GM12878 (cell line): ENCODE measurements at regions of chr1 and their contacts with region 1.

Region 1: GRCh38 chr1:78839704-78840277 is 166.7 kb downstream of the ADGRL4 start:
- DNase-seq: no peak
- ATAC-seq: peak; percentile 75
- H3K4me3 ChIP-seq: no peak overlapping the region
- H3K27ac ChIP-seq: no peak overlapping the region
- H3K4me1 ChIP-seq: no peaks in the 10 kb centered on the region
- H3K27me3 ChIP-seq: no peaks in the 10 kb centered on the region
- CTCF ChIP-seq: peak; percentile 43 to 65 (median 54)
- EP300 ChIP-seq: no peak
- POLR2A ChIP-seq: no peak
- RAD21 ChIP-seq: peak; percentile 78

Region 2: DNA sequence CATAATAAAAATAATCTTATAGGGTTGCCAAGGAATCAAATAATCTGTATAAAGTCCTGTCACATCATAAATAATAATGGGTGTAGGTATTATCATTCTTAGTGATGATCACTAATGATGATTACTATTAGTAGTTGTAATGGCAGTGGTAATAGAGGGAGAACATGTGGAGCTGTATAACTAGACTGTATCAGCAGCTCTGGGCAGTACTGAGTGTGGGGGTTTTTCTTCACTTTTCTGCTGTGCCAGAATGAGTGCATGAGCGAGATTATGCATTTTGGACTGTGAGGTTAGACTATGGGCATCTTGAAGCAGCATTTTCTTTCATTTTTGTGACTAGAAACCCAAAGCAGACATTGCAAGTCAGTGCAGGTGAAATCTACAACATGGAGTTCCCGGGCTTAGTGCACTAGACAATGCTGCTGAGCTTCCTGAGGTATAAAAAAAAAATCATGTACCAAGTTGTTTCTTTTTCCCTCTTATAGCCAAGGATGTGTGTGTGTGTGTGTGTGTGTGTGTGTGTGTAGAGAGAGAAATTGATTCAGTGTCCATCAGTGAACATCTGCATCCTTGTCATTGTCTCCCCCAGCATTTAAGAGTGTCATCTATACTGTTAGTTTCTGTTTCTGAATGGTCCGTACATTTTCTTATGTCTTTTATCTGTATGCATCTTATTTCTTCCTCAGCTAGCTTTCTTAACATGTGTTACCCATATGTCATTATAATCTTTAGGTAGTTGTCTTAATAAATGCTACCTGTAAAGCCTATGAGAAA is 707.4 kb before region 1 on chr1:
- CTCF ChIA-PET with region 1: no interaction called
- POLR2A ChIA-PET with region 1: no interaction called
- RAD21 ChIA-PET with region 1: no interaction called
- SMC1A ChIA-PET with region 1: no interaction called
- in situ Hi-C with region 1: no loop called
- intact Hi-C with region 1: loop called (anchors 10 kb)
- DNase-seq: no peak
- ATAC-seq: peak; percentile 59
- H3K4me3 ChIP-seq: no peak overlapping the region
- H3K27ac ChIP-seq: no peak overlapping the region
- H3K4me1 ChIP-seq: no peaks in the 10 kb centered on the region; the same call in 1 of the 2 replicates
- H3K27me3 ChIP-seq: no peaks in the 10 kb centered on the region
- CTCF ChIP-seq: no peak
- EP300 ChIP-seq: no peak
- POLR2A ChIP-seq: no peak
- RAD21 ChIP-seq: no peak

Region 3: GRCh38 chr1:78645723-78646122 is 194.1 kb before region 1 on chr1:
- CTCF ChIA-PET with region 1: no interaction called
- POLR2A ChIA-PET with region 1: no interaction called
- RAD21 ChIA-PET with region 1: no interaction called
- SMC1A ChIA-PET with region 1: no interaction called
- in situ Hi-C with region 1: no loop called
- intact Hi-C with region 1: no loop called
- DNase-seq: no peak
- ATAC-seq: no peak
- H3K4me3 ChIP-seq: no peak overlapping the region
- H3K27ac ChIP-seq: no peak overlapping the region
- H3K4me1 ChIP-seq: peaks cover 4% of the 10 kb centered on the region; the same call in 1 of the 2 replicates
- H3K27me3 ChIP-seq: no peaks in the 10 kb centered on the region
- CTCF ChIP-seq: no peak
- EP300 ChIP-seq: no peak
- POLR2A ChIP-seq: no peak
- RAD21 ChIP-seq: no peak

Region 4: GRCh38 chr1:78855258-78855657 is 15.5 kb after region 1 on chr1:
- CTCF ChIA-PET with region 1: interaction called, 29 read pairs
- POLR2A ChIA-PET with region 1: interaction called, 4 read pairs
- RAD21 ChIA-PET with region 1: interaction called, 6 read pairs
- SMC1A ChIA-PET with region 1: interaction called, 30 read pairs
- in situ Hi-C with region 1: no loop called
- intact Hi-C with region 1: no loop called
- DNase-seq: peak; percentile 46
- ATAC-seq: peak; percentile 93
- H3K4me3 ChIP-seq: no peak overlapping the region
- H3K27ac ChIP-seq: no peak overlapping the region
- H3K4me1 ChIP-seq: no peaks in the 10 kb centered on the region
- H3K27me3 ChIP-seq: no peaks in the 10 kb centered on the region
- CTCF ChIP-seq: no peak
- EP300 ChIP-seq: no peak; a peak in 1 of 4 replicates
- POLR2A ChIP-seq: no peak
- RAD21 ChIP-seq: no peak

Region 5: GRCh38 chr1:79042117-79042516 is 202.3 kb after region 1 on chr1:
- CTCF ChIA-PET with region 1: interaction called, 18 read pairs
- POLR2A ChIA-PET with region 1: no interaction called
- RAD21 ChIA-PET with region 1: interaction called, 4 read pairs
- SMC1A ChIA-PET with region 1: interaction called, 9 read pairs
- in situ Hi-C with region 1: no loop called
- intact Hi-C with region 1: loop called (anchors 5 kb)
- DNase-seq: peak; percentile 44
- ATAC-seq: peak; percentile 64
- H3K4me3 ChIP-seq: no peak overlapping the region
- H3K27ac ChIP-seq: no peak overlapping the region
- H3K4me1 ChIP-seq: peaks cover 8% of the 10 kb centered on the region; the same call in 1 of the 2 replicates
- H3K27me3 ChIP-seq: no peaks in the 10 kb centered on the region
- CTCF ChIP-seq: no peak
- EP300 ChIP-seq: peak; percentile 58 to 59; a peak in 2 of 4 replicates
- POLR2A ChIP-seq: no peak
- RAD21 ChIP-seq: no peak

Region 6: DNA sequence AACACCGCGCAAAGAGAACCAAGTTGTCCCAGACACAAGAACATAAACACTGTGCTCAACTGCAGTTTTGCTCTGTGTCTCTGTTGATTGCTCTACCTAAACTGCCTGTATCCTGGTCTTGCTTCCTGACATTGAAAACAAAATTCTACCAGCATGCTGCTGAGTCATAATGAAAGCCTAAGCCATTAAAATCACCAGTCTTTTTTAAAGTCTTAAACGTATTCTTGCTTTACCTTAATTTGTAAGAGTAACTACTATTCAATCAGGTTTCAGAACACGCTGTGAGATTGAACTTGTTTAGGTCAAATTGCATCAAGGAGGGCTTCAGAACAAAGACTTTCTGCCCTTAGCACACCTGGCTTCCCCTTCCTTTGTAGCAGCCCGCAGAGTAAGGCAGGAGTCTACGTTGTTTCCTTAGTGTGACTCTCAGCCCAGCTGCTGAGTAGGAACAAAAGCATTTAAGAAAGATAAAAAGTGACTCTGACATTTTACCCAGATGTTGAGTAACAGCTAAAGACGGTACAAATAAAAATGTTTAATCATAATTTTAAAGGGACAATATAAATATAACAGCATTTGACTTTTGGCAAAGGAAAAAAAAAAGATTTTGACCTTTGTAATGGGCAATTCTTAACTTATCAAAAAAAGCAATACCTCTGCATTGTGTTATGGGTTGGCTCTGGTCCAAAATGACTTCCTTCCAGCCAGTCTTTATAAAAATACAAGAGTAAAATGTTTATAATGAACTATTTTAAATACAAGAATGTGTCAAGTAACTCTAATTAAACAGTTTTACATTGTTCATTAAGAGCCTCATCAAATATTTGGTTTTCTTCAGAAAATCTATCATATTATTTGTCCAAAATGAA is 353.7 kb after region 1 on chr1:
- CTCF ChIA-PET with region 1: interaction called, 27 read pairs
- POLR2A ChIA-PET with region 1: no interaction called
- RAD21 ChIA-PET with region 1: interaction called, 42 read pairs
- SMC1A ChIA-PET with region 1: interaction called, 14 read pairs
- in situ Hi-C with region 1: loop called (anchors 10 kb)
- intact Hi-C with region 1: loop called (anchors 1 kb)
- DNase-seq: peak; percentile 41
- ATAC-seq: peak; percentile 78
- H3K4me3 ChIP-seq: no peak overlapping the region
- H3K27ac ChIP-seq: no peak overlapping the region
- H3K4me1 ChIP-seq: no peaks in the 10 kb centered on the region
- H3K27me3 ChIP-seq: no peaks in the 10 kb centered on the region
- CTCF ChIP-seq: no peak
- EP300 ChIP-seq: no peak
- POLR2A ChIP-seq: no peak
- RAD21 ChIP-seq: no peak

Region 7: DNA sequence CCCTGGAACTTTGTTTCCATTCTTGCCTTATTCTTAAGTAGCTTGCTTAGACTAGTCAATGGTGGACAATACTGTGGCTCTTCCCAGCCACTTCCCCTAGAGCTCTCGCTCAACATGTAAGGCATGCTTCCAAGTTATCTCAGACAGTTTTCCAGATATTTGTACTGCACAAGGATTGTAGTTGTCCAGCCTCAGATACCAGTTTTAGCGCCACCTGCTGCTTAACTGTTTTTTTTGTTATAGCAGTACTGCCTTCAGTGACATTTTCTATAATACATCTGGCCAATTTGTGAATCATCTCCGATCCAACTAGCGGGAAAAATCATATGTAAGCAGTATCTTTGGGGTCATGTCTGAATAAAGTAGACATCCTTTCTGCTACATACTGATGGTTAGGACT is 513.4 kb after region 1 on chr1:
- CTCF ChIA-PET with region 1: interaction called, 91 read pairs
- POLR2A ChIA-PET with region 1: no interaction called
- RAD21 ChIA-PET with region 1: interaction called, 12 read pairs
- SMC1A ChIA-PET with region 1: interaction called, 30 read pairs
- in situ Hi-C with region 1: loop called (anchors 10 kb)
- intact Hi-C with region 1: loop called (anchors 2 kb)
- DNase-seq: no peak
- ATAC-seq: peak; percentile 79
- H3K4me3 ChIP-seq: no peak overlapping the region
- H3K27ac ChIP-seq: no peak overlapping the region
- H3K4me1 ChIP-seq: no peaks in the 10 kb centered on the region
- H3K27me3 ChIP-seq: no peaks in the 10 kb centered on the region
- CTCF ChIP-seq: peak; percentile 40 to 54 (median 40)
- EP300 ChIP-seq: no peak
- POLR2A ChIP-seq: no peak
- RAD21 ChIP-seq: peak; percentile 32; the same call in 1 of the 2 replicates

Region 8: GRCh38 chr1:79478160-79478559 is 638.4 kb after region 1 on chr1:
- CTCF ChIA-PET with region 1: no interaction called
- POLR2A ChIA-PET with region 1: no interaction called
- RAD21 ChIA-PET with region 1: no interaction called
- SMC1A ChIA-PET with region 1: no interaction called
- in situ Hi-C with region 1: no loop called
- intact Hi-C with region 1: loop called (anchors 10 kb)
- DNase-seq: no peak
- ATAC-seq: no peak
- H3K4me3 ChIP-seq: no peak overlapping the region
- H3K27ac ChIP-seq: no peak overlapping the region
- H3K4me1 ChIP-seq: 0 out of 2 replicates have a peak, but pooled peaks cover 3% of the 10 kb centered on the region
- H3K27me3 ChIP-seq: no peaks in the 10 kb centered on the region
- CTCF ChIP-seq: no peak
- EP300 ChIP-seq: no peak
- POLR2A ChIP-seq: no peak
- RAD21 ChIP-seq: no peak